Panc1 (cell line): ENCODE measurements at regions of chr1 and their contacts with region 1.

Region 1: GRCh38 chr1:52662645-52663313 is 29.8 kb downstream of the SHISAL2A start:
- DNase-seq: no peak
- ATAC-seq: peak; percentile 87
- H3K4me3 ChIP-seq: peak overlapping the region; percentile 5 to 38; a peak in 3 of 4 replicates
- H3K27ac ChIP-seq: peak overlapping the region; percentile 64
- H3K4me1 ChIP-seq: peaks cover 17% of the 10 kb centered on the region; the same call in 1 of the 2 replicates
- H3K27me3 ChIP-seq: no peaks in the 10 kb centered on the region
- CTCF ChIP-seq: no peak; the same call in 1 of the 2 replicates

Region 2: GRCh38 chr1:52424231-52424636 is 238.5 kb before region 1 on chr1:
- CTCF ChIA-PET with region 1: no interaction called
- POLR2A ChIA-PET with region 1: no interaction called
- in situ Hi-C with region 1: no loop called
- intact Hi-C with region 1: loop called (anchors 10 kb)
- DNase-seq: no peak
- ATAC-seq: peak; percentile 62; the same call in 1 of the 2 replicates
- H3K4me3 ChIP-seq: no peak overlapping the region
- H3K27ac ChIP-seq: no peak overlapping the region
- H3K4me1 ChIP-seq: no peaks in the 10 kb centered on the region; the same call in 1 of the 2 replicates
- H3K27me3 ChIP-seq: no peaks in the 10 kb centered on the region
- CTCF ChIP-seq: no peak

Region 3: DNA sequence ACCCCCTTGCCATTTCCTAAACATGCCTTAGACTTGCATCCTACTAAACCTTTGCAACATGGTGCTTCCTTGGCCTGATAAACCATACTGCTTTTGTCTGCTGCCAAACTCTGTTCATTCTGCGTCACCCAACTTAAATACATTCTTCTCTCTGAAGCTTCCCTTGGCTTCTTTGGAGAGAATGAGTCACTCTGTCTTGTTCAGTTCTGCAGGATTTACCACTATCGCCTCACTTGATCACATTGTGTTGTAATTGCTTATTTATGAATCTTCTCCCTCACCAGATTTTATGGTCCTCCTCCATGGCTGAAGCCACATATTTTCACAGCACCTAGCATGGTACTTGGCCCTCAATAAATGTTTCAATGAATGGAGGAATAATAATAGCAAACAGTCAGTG is 88.2 kb before region 1 on chr1:
- CTCF ChIA-PET with region 1: no interaction called
- POLR2A ChIA-PET with region 1: interaction called, 7 read pairs
- in situ Hi-C with region 1: no loop called
- intact Hi-C with region 1: loop called (anchors 10 kb)
- DNase-seq: no peak
- ATAC-seq: peak; percentile 70; the same call in 1 of the 2 replicates
- H3K4me3 ChIP-seq: no peak overlapping the region
- H3K27ac ChIP-seq: no peak overlapping the region
- H3K4me1 ChIP-seq: no peaks in the 10 kb centered on the region
- H3K27me3 ChIP-seq: no peaks in the 10 kb centered on the region
- CTCF ChIP-seq: no peak

Region 4: GRCh38 chr1:53014791-53015507 is 352.2 kb after region 1 on chr1:
- CTCF ChIA-PET with region 1: no interaction called
- POLR2A ChIA-PET with region 1: no interaction called
- in situ Hi-C with region 1: no loop called
- intact Hi-C with region 1: no loop called
- DNase-seq: peak; percentile 71
- ATAC-seq: peak; percentile 96
- H3K4me3 ChIP-seq: peak overlapping the region; percentile 69 to 84
- H3K27ac ChIP-seq: peak overlapping the region; percentile 84
- H3K4me1 ChIP-seq: 0 out of 2 replicates have a peak, but pooled peaks cover 2% of the 10 kb centered on the region
- H3K27me3 ChIP-seq: no peaks in the 10 kb centered on the region
- CTCF ChIP-seq: no peak